Activated naive CD8-positive, alpha-beta T cell treated with anti-CD3 and anti-CD28 coated beads, Interleukin-2, amount 10 ng/mL, durations not matched to agents 7 days and 5 days (primary cell): ENCODE measurements at regions of chr15 and their contacts with region 1.

Region 1: DNA sequence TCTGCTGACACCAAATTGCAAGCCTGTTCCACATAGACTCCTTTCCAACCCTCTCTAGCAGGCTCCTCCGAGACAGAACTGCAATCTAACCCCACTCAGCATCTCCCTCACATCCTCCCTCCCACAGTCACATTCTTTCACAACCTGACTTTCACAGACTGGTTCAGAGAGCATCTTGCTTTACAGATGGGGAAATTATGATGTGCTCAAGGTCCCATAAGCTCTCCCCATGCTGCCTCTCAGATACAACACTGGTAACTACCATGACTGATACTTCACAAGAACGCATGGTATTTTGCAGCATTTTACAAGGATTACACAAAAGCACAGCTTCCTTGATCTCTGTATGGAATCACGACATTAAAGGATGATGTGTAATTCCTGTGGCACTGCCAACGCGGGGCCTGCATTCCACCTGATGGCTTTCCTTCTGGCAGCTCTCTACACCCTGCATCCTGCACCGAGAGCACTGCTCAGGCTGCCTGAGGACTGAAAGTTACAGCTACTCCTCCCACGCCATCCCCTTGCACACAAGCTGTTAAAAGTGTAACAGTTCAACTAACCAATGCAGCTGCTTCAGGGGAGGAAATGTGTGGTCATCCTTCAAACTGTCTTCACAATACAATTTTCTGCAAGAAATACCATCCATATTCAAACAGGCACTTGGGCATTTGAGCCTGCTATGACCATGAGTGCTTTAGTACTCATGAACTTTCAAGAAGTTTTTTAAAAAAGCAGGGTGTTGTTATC is 27.6 kb downstream of the TBC1D2B start:
- DNase-seq: no peak
- ATAC-seq: peak; percentile 80
- H3K4me3 Mint-ChIP-seq: peak overlapping the region; percentile 76
- H3K27ac Mint-ChIP-seq: peak overlapping the region; percentile 93
- H3K4me1 Mint-ChIP-seq: peaks cover 76% of the 10 kb centered on the region
- H3K27me3 Mint-ChIP-seq: no peaks in the 10 kb centered on the region

Region 2: GRCh38 chr15:78034495-78035191 is 15.2 kb before region 1 on chr15:
- POLR2A ChIA-PET with region 1: interaction called, 50 read pairs
- DNase-seq: peak; percentile 77
- ATAC-seq: peak; percentile 89
- H3K4me3 Mint-ChIP-seq: peak overlapping the region; percentile 69
- H3K27ac Mint-ChIP-seq: peak overlapping the region; percentile 71
- H3K4me1 Mint-ChIP-seq: peaks cover 68% of the 10 kb centered on the region
- H3K27me3 Mint-ChIP-seq: no peaks in the 10 kb centered on the region

Region 3: DNA sequence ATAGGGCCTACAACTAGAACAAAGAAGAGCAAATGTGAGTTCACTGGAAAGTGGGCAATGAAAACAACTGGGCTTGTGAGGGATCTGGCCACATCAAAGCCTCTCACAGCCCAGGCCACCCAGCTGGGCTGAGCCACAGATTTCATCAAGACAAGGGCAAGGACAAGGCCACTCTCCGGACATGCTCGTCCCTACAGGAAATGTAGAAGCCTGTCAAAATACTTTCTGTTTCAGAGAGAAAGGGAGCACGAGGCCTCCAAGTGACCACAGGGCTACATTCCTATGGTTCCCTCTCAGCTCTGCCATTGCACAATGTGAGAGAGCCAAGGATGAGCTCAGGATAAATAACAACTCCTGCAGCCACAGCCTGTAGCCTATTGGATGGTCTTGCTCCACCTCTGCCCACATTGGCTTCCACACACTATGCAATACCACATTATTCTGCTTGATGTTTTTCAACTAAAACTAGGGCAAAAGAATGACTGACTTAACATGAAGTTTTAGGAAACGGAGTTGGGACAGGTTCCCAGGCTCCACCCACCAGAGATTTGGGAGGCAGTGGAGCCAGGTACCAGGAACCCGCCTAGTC is 15.5 kb after region 1 on chr15:
- POLR2A ChIA-PET with region 1: interaction called, 42 read pairs
- DNase-seq: no peak
- ATAC-seq: no peak
- H3K4me3 Mint-ChIP-seq: no peak overlapping the region
- H3K27ac Mint-ChIP-seq: no peak overlapping the region
- H3K4me1 Mint-ChIP-seq: peaks cover 51% of the 10 kb centered on the region
- H3K27me3 Mint-ChIP-seq: no peaks in the 10 kb centered on the region

Region 4: GRCh38 chr15:78072080-78072892 is 22.4 kb after region 1 on chr15:
- POLR2A ChIA-PET with region 1: interaction called, 42 read pairs
- DNase-seq: no peak
- ATAC-seq: peak; percentile 17
- H3K4me3 Mint-ChIP-seq: peak overlapping the region; percentile 79
- H3K27ac Mint-ChIP-seq: peak overlapping the region; percentile 49
- H3K4me1 Mint-ChIP-seq: peaks cover 68% of the 10 kb centered on the region
- H3K27me3 Mint-ChIP-seq: no peaks in the 10 kb centered on the region